Esophagus squamous epithelium (tissue), 5 donors: ENCODE measurements at regions of chr18 and their contacts with region 1.

Region 1: DNA sequence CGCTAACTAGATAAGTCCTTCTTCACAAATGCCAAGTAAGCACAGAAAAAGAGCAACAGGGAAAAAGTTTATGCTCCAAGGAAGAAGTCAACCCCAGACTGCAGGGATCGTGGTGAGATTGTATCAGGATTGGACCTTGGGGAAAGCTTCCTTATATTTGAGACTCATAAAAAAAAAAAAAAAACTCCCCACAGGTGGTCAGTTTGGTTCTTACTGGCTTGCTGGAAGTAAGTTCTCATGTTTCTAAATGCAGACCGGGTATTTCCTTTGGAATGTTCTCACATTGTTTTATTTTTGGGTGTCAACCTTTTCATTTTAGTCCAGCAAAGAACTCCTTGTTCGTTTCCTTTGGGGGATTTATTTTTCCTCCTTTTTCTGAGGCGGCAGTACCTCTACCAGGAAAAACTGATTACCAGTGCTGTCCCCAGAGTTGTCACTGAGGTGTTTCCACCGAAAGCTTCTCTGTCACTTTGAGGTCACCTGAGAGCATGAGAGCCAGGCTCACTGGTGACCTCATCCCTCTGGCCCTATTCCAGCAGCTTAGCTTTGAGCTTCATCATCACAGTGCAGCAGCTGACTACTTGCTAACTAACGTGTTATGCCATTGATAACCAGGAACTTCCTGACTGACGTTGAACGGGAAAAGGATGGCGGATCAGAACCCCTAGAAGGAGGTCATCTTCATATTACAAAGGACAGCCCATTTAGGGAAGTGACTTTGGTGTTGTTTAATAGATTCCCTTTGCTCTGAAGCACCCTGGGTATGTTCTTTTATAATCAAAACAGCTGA is 16.8 kb upstream of the ATP8B1 start:
- DNase-seq: no peak
- H3K4me3 ChIP-seq: peak overlapping the region in 1 of 4 donors; percentile 19
- H3K27ac ChIP-seq: peak overlapping the region; percentile 8 to 57 (median 50)
- H3K4me1 ChIP-seq: peaks cover 0 to 12% (median 5%) of the 10 kb centered on the region in 3 donors
- H3K27me3 ChIP-seq: no peaks in the 10 kb centered on the region
- CTCF ChIP-seq: no peak
- POLR2A ChIP-seq: no peak

Region 2: DNA sequence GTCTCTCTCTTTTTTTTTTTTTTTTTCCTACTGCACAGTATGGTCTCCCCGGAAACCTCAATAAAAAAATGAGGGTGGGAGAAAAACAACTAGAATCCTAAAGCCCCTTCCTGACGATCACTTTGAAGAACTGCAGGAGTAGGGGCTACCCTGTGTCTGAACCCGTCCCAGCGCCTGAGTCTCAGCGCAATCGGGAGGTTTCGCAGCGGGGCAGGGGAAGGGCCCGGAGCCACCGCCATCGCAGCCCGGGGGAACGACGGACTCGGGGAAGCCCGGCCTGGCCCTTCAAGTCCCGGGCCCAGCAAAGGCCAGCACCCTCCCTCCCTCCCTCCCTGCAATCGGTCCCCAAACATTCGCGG is 198.6 kb before region 1 on chr18:
- intact Hi-C with region 1: no loop called
- DNase-seq: no peak
- H3K4me3 ChIP-seq: peak overlapping the region; percentile 53 to 95 (median 91)
- H3K27ac ChIP-seq: peak overlapping the region; percentile 87 to 97 (median 94)
- H3K4me1 ChIP-seq: peaks cover 0 to 33% (median 13%) of the 10 kb centered on the region in 3 donors
- H3K27me3 ChIP-seq: no peaks in the 10 kb centered on the region
- CTCF ChIP-seq: no peak
- POLR2A ChIP-seq: no peak

Region 3: GRCh38 chr18:57649556-57650500 is 170.0 kb before region 1 on chr18:
- intact Hi-C with region 1: loop called (anchors 10 kb)
- DNase-seq: no peak
- H3K4me3 ChIP-seq: no peak overlapping the region
- H3K27ac ChIP-seq: peak overlapping the region; percentile 27 to 62 (median 54)
- H3K4me1 ChIP-seq: peaks cover 0 to 14% (median 9%) of the 10 kb centered on the region in 3 donors
- H3K27me3 ChIP-seq: no peaks in the 10 kb centered on the region
- CTCF ChIP-seq: no peak
- POLR2A ChIP-seq: no peak

Region 4: GRCh38 chr18:58584200-58585127 is 764.6 kb after region 1 on chr18:
- intact Hi-C with region 1: no loop called
- DNase-seq: no peak
- H3K4me3 ChIP-seq: no peak overlapping the region
- H3K27ac ChIP-seq: no peak overlapping the region
- H3K4me1 ChIP-seq: peaks cover 0 to 5% (median 0%) of the 10 kb centered on the region in 3 donors
- H3K27me3 ChIP-seq: peaks cover 0 to 11% (median 0%) of the 10 kb centered on the region in 4 donors
- CTCF ChIP-seq: no peak
- POLR2A ChIP-seq: no peak